ENCODE measurements at regions of chr7 and their contacts with region 1.

Region 1: GRCh38 chr7:87152107-87152844 is at the start of gene DMTF1:
- DNase-seq: peak; percentile 67 to 94 (median 87)
- ATAC-seq: peak; percentile 75
- H3K4me3 ChIP-seq: peak within 1 kb of the TSS; percentile 63 to 85
- H3K4me3 Mint-ChIP-seq: peak within 1 kb of the TSS; percentile 99
- H3K27ac ChIP-seq: peak within 1 kb of the TSS; percentile 92 to 97
- H3K27ac Mint-ChIP-seq: peak within 1 kb of the TSS; percentile 97
- H3K4me1 ChIP-seq: peaks cover 42% of the 10 kb centered on the region
- H3K4me1 Mint-ChIP-seq: peaks cover 48% of the 10 kb centered on the region
- H3K27me3 ChIP-seq: no peaks in the 10 kb centered on the region
- H3K27me3 Mint-ChIP-seq: no peaks in the 10 kb centered on the region
- CTCF ChIP-seq: no peak
- total RNA-seq, gene DMTF1: 97.9 to 103 TPM

Region 2: DNA sequence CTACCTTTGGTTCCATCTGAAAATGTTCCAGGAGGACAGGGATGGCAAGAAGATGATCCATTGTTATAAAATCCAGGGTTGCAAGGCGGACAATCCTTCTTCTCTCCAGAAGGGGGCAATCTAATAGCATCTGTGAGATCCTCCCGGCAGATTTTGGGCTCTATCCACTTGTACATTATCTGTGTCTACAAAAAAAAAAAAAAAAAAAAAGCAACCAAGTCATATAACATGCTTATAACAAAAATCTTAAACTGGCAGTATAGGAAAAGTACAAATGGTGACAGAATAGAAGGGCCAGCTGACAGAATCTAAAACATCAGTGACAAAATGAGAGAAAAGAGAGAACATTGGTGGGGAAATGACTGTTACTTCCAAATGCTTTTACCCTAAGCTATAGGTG is 225.5 kb before region 1 on chr7:
- CTCF ChIA-PET with region 1: interaction called, 17 read pairs
- POLR2A ChIA-PET with region 1: no interaction called
- intact Hi-C with region 1: loop called (anchors 1 to 2 kb)
- DNase-seq: peak in 4 of 9 experiments; percentile 35 to 67 (median 50)
- ATAC-seq: peak; percentile 85
- H3K4me3 ChIP-seq: no peak overlapping the region
- H3K4me3 Mint-ChIP-seq: no peak overlapping the region
- H3K27ac ChIP-seq: no peak overlapping the region
- H3K27ac Mint-ChIP-seq: no peak overlapping the region
- H3K4me1 ChIP-seq: no peaks in the 10 kb centered on the region
- H3K4me1 Mint-ChIP-seq: no peaks in the 10 kb centered on the region
- H3K27me3 ChIP-seq: no peaks in the 10 kb centered on the region
- H3K27me3 Mint-ChIP-seq: peaks cover 8% of the 10 kb centered on the region
- CTCF ChIP-seq: peak; percentile 91

Region 3: DNA sequence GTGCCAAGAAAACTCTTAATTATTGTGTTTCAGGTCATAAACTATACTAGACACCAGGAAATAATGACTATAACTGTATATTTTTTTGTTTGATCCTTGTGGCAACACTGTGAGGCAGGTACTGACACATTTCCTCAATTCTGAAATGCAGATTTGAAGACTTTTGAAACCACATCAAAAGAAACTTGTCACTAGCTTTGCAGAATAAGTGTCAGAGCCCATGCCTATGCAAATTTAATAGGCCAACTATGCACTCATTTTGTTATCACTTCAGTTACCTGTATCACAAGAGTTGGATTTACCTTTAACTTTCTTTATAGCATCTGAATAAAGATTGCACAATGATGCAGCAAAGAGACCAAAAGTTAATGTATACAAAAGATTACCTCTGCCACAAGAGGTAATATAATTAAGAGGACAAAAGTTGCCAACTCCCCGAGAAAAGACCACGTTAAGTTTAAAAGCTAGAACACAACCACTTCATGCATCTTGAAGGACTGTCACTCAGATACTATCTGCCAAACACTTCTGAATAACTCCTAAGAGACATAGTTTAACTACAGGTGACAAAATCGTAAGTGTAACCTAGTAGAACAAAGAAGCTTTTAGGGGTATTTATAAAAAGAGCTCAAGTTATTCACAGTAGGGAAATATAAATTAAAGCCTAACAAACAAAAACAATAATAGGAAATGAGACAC is 173.3 kb before region 1 on chr7:
- CTCF ChIA-PET with region 1: no interaction called
- POLR2A ChIA-PET with region 1: no interaction called
- intact Hi-C with region 1: loop called in 1 of 2 experiments (anchors 1 kb)
- DNase-seq: peak in 3 of 9 experiments; percentile 26 to 85 (median 75)
- ATAC-seq: peak; percentile 90
- H3K4me3 ChIP-seq: no peak overlapping the region
- H3K4me3 Mint-ChIP-seq: peak overlapping the region; percentile 46
- H3K27ac ChIP-seq: peak overlapping the region; percentile 28 to 51
- H3K27ac Mint-ChIP-seq: peak overlapping the region; percentile 91
- H3K4me1 ChIP-seq: peaks cover 27% of the 10 kb centered on the region
- H3K4me1 Mint-ChIP-seq: peaks cover 41% of the 10 kb centered on the region
- H3K27me3 ChIP-seq: no peaks in the 10 kb centered on the region
- H3K27me3 Mint-ChIP-seq: no peaks in the 10 kb centered on the region
- CTCF ChIP-seq: no peak

Region 4: GRCh38 chr7:87173471-87173870 is 21.2 kb after region 1 on chr7:
- CTCF ChIA-PET with region 1: interaction called, 3 read pairs
- POLR2A ChIA-PET with region 1: interaction called, 10 read pairs
- intact Hi-C with region 1: loop called in 1 of 2 experiments (anchors 2 kb)
- DNase-seq: no peak
- ATAC-seq: no peak
- H3K4me3 ChIP-seq: no peak overlapping the region
- H3K4me3 Mint-ChIP-seq: no peak overlapping the region
- H3K27ac ChIP-seq: no peak overlapping the region
- H3K27ac Mint-ChIP-seq: peak overlapping the region; percentile 37
- H3K4me1 ChIP-seq: no peaks in the 10 kb centered on the region
- H3K4me1 Mint-ChIP-seq: peaks cover 39% of the 10 kb centered on the region
- H3K27me3 ChIP-seq: no peaks in the 10 kb centered on the region
- H3K27me3 Mint-ChIP-seq: no peaks in the 10 kb centered on the region
- CTCF ChIP-seq: no peak

Region 5: GRCh38 chr7:87213811-87214210 is 61.5 kb after region 1 on chr7:
- CTCF ChIA-PET with region 1: interaction called, 26 read pairs
- POLR2A ChIA-PET with region 1: interaction called, 112 read pairs
- intact Hi-C with region 1: loop called (anchors 1 kb)
- DNase-seq: no peak
- ATAC-seq: no peak
- H3K4me3 ChIP-seq: no peak overlapping the region
- H3K4me3 Mint-ChIP-seq: peak overlapping the region; percentile 81
- H3K27ac ChIP-seq: peak overlapping the region in 1 of 2 experiments; percentile 60
- H3K27ac Mint-ChIP-seq: peak overlapping the region; percentile 95
- H3K4me1 ChIP-seq: peaks cover 87% of the 10 kb centered on the region
- H3K4me1 Mint-ChIP-seq: peaks cover 87% of the 10 kb centered on the region
- H3K27me3 ChIP-seq: no peaks in the 10 kb centered on the region
- H3K27me3 Mint-ChIP-seq: no peaks in the 10 kb centered on the region
- CTCF ChIP-seq: no peak

Region 6: GRCh38 chr7:87416682-87417587 is 264.7 kb after region 1 on chr7:
- CTCF ChIA-PET with region 1: no interaction called
- POLR2A ChIA-PET with region 1: no interaction called
- intact Hi-C with region 1: no loop called
- DNase-seq: peak; percentile 38 to 79 (median 71)
- ATAC-seq: peak; percentile 68
- H3K4me3 ChIP-seq: no peak overlapping the region
- H3K4me3 Mint-ChIP-seq: no peak overlapping the region
- H3K27ac ChIP-seq: no peak overlapping the region
- H3K27ac Mint-ChIP-seq: no peak overlapping the region
- H3K4me1 ChIP-seq: no peaks in the 10 kb centered on the region
- H3K4me1 Mint-ChIP-seq: no peaks in the 10 kb centered on the region
- H3K27me3 ChIP-seq: no peaks in the 10 kb centered on the region
- H3K27me3 Mint-ChIP-seq: peaks cover 2% of the 10 kb centered on the region
- CTCF ChIP-seq: peak; percentile 80

Region 7: DNA sequence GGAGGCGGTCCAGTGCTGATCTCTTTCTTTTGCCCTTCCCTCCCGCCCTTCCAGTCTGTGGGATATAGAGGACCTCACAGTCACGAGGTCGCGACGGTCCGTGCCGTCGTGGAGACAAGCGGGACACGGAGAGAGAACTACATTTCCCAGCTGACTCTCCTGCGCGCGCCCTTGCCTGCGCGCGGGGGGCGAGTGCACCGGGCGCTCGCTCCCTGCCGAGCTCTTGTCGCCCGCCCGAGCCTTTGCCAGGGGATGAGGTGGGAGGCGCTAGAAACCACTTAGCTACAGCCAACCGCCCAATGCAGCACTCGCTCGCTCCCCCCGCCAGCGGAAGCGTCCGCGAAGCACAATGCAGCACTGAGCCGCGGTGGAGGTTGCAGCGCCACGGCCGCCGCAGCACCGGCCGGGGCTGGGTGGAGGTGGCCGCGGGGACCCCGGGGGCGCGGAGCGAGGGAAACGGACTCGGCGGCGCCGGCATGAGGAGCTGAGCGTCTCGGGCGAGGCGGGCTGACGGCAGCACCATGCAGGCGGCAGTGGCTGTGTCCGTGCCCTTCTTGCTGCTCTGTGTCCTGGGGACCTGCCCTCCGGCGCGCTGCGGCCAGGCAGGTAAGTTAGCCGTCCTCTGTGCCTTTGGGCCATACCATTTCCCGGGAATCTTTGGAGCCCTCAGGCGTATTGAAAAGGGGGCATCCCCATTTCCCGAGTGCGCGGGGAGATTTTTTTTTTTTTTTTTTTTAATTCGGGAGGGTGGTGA is 781.8 kb after region 1 on chr7 and contains the start of gene ADAM22:
- CTCF ChIA-PET with region 1: no interaction called
- POLR2A ChIA-PET with region 1: interaction called, 4 read pairs
- intact Hi-C with region 1: loop called in 1 of 2 experiments (anchors 5 kb)
- DNase-seq: peak; percentile 65 to 94 (median 85)
- ATAC-seq: peak; percentile 94
- H3K4me3 ChIP-seq: peak within 1 kb of the TSS; percentile 73 to 82
- H3K4me3 Mint-ChIP-seq: peak within 1 kb of the TSS; percentile 89
- H3K27ac ChIP-seq: peak within 1 kb of the TSS; percentile 32 to 71
- H3K27ac Mint-ChIP-seq: peak within 1 kb of the TSS; percentile 79
- H3K4me1 ChIP-seq: peaks cover 7% of the 10 kb centered on the region
- H3K4me1 Mint-ChIP-seq: peaks cover 11% of the 10 kb centered on the region
- H3K27me3 ChIP-seq: no peaks in the 10 kb centered on the region
- H3K27me3 Mint-ChIP-seq: no peaks in the 10 kb centered on the region
- CTCF ChIP-seq: no peak
- total RNA-seq, gene ADAM22: 1.1 to 1.7 TPM

Measured in CD8-positive, alpha-beta T cell (primary cell).